ENCODE measurements at regions of chr11 and their contacts with region 1.

Region 1: GRCh38 chr11:100316952-100317351 is 370.1 kb upstream of the ARHGAP42 start:
- DNase-seq: no peak
- H3K4me3 ChIP-seq: no peak overlapping the region
- H3K27ac ChIP-seq: no peak overlapping the region
- H3K4me1 ChIP-seq: no peaks in the 10 kb centered on the region
- H3K27me3 ChIP-seq: peaks cover 2% of the 10 kb centered on the region
- CTCF ChIP-seq: no peak

Region 2: GRCh38 chr11:99406345-99406744 is 910.6 kb before region 1 on chr11:
- CTCF ChIA-PET with region 1: no interaction called
- dilution Hi-C with region 1: no loop called
- in situ Hi-C with region 1: no loop called
- intact Hi-C with region 1: no loop called
- DNase-seq: no peak
- H3K4me3 ChIP-seq: no peak overlapping the region
- H3K27ac ChIP-seq: no peak overlapping the region
- H3K4me1 ChIP-seq: no peaks in the 10 kb centered on the region
- H3K27me3 ChIP-seq: no peaks in the 10 kb centered on the region
- CTCF ChIP-seq: no peak

Region 3: GRCh38 chr11:100383357-100383865 is 66.5 kb after region 1 on chr11:
- CTCF ChIA-PET with region 1: no interaction called
- dilution Hi-C with region 1: loop called (anchors 5 kb)
- in situ Hi-C with region 1: no loop called
- intact Hi-C with region 1: no loop called
- DNase-seq: no peak
- H3K4me3 ChIP-seq: no peak overlapping the region
- H3K27ac ChIP-seq: no peak overlapping the region
- H3K4me1 ChIP-seq: no peaks in the 10 kb centered on the region
- H3K27me3 ChIP-seq: no peaks in the 10 kb centered on the region
- CTCF ChIP-seq: no peak

Measured in mammary epithelial cell (primary cell).